ENCODE measurements at regions of chr11 and their contacts with region 1.

Region 1: GRCh38 chr11:102346748-102347461 is at the start of gene BIRC2:
- DNase-seq: peak; percentile 91 to 98 (median 94)
- ATAC-seq: peak; percentile 81
- H3K4me3 ChIP-seq: peak within 1 kb of the TSS; percentile 65
- H3K4me3 Mint-ChIP-seq: peak within 1 kb of the TSS; percentile 98
- H3K27ac ChIP-seq: peak within 1 kb of the TSS; percentile 95 to 96
- H3K27ac Mint-ChIP-seq: peak within 1 kb of the TSS; percentile 100
- H3K4me1 ChIP-seq: peaks cover 7% of the 10 kb centered on the region
- H3K4me1 Mint-ChIP-seq: peaks cover 44% of the 10 kb centered on the region
- H3K27me3 ChIP-seq: no peaks in the 10 kb centered on the region
- H3K27me3 Mint-ChIP-seq: no peaks in the 10 kb centered on the region
- CTCF ChIP-seq: peak; percentile 72
- total RNA-seq, gene BIRC2: 107 to 109 TPM

Region 2: DNA sequence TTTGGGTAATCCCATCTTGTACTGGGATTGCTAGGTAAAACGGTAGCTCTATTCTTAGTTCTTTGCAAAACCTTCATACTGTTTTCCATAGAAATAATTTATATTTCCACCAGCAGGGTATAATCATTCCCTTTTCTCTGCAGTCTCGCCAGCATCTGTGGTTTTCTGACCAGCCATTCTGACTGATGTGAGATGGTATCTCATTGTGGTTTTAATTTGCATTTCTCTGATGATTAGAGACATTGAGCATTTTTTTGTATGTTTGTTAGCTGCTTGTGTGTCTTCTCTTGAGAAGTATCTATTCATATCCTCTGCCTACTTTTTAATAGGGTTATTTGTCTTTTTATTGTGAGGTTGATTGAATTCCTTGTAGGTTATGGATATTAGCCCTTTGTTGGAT is 1438.2 kb before region 1 on chr11:
- CTCF ChIA-PET with region 1: no interaction called
- POLR2A ChIA-PET with region 1: no interaction called
- intact Hi-C with region 1: no loop called
- DNase-seq: no peak
- ATAC-seq: no peak
- H3K4me3 ChIP-seq: no peak overlapping the region
- H3K4me3 Mint-ChIP-seq: no peak overlapping the region
- H3K27ac ChIP-seq: no peak overlapping the region
- H3K27ac Mint-ChIP-seq: no peak overlapping the region
- H3K4me1 ChIP-seq: no peaks in the 10 kb centered on the region
- H3K4me1 Mint-ChIP-seq: no peaks in the 10 kb centered on the region
- H3K27me3 ChIP-seq: no peaks in the 10 kb centered on the region
- H3K27me3 Mint-ChIP-seq: no peaks in the 10 kb centered on the region
- CTCF ChIP-seq: no peak

Region 3: GRCh38 chr11:102097186-102097585 is 249.7 kb before region 1 on chr11:
- CTCF ChIA-PET with region 1: no interaction called
- POLR2A ChIA-PET with region 1: no interaction called
- intact Hi-C with region 1: no loop called
- DNase-seq: no peak
- ATAC-seq: no peak
- H3K4me3 ChIP-seq: no peak overlapping the region
- H3K4me3 Mint-ChIP-seq: no peak overlapping the region
- H3K27ac ChIP-seq: no peak overlapping the region
- H3K27ac Mint-ChIP-seq: no peak overlapping the region
- H3K4me1 ChIP-seq: no peaks in the 10 kb centered on the region
- H3K4me1 Mint-ChIP-seq: no peaks in the 10 kb centered on the region
- H3K27me3 ChIP-seq: no peaks in the 10 kb centered on the region
- H3K27me3 Mint-ChIP-seq: peaks cover 13% of the 10 kb centered on the region
- CTCF ChIP-seq: no peak

Region 4: DNA sequence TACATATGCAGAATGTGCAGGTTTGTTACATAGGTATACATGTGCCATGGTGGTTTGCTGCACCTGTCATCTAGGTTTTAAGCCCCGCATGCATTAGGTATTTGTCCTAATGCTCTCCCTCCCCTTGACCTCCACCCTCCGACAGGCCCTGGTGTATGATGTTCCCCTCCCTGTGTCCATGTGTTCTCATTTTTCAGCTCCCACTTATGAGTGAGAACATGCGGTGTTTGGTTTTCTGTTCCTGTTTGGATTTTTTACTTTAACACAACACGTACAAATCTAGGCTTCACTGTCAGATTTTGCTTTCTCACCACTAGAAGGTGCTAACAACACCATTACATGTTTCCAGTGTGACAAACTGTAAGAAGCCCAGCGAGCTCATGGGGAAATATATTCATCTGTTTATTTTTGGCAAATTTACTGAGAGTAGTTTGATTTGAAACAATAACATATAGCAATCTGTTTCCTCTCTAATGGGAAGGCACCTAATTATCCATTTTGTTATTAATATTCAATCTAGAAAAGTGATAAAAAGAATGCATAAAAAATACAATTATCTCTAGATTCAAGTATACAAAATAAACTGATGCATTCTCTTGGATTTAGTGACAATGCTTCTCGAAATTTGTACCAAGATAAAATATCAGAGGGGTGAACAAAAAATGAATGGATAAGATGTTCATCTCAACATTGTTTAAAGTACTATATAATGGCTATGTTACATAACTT is 52.9 kb before region 1 on chr11:
- CTCF ChIA-PET with region 1: interaction called, 24 read pairs
- POLR2A ChIA-PET with region 1: interaction called, 12 read pairs
- intact Hi-C with region 1: loop called in 1 of 2 experiments (anchors 2 kb)
- DNase-seq: peak in 5 of 14 experiments; percentile 8 to 85 (median 79)
- ATAC-seq: peak; percentile 99
- H3K4me3 ChIP-seq: peak overlapping the region; percentile 48
- H3K4me3 Mint-ChIP-seq: peak overlapping the region; percentile 82
- H3K27ac ChIP-seq: no peak overlapping the region
- H3K27ac Mint-ChIP-seq: peak overlapping the region; percentile 68
- H3K4me1 ChIP-seq: peaks cover 14% of the 10 kb centered on the region
- H3K4me1 Mint-ChIP-seq: peaks cover 36% of the 10 kb centered on the region
- H3K27me3 ChIP-seq: no peaks in the 10 kb centered on the region
- H3K27me3 Mint-ChIP-seq: no peaks in the 10 kb centered on the region
- CTCF ChIP-seq: peak; percentile 92

Region 5: DNA sequence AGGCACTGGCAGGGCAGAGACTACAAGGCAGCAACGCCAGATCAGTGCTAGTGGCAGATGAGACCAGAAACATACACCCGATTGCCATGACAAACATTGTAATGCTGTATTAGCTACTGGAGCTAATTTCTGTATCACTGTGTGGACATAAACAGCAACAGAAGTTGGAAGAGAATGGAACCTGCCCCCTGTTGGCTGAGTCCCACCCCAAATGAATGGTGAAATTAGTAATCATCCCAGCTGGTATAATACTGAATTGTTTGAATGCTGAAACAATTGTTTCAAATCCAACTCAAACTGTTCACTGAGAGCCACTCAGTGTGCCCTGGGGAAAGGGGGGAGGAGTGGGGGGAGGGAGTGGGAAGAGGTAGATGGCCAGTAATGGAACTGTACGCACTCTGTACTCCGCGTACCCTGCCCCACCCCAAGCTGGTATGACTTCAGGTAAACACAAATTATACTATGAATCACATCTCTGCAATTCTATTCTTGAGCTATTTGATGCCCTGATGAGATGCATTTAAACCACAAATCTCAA is 40.8 kb before region 1 on chr11:
- CTCF ChIA-PET with region 1: interaction called, 15 read pairs
- POLR2A ChIA-PET with region 1: interaction called, 7 read pairs
- intact Hi-C with region 1: loop called in 1 of 2 experiments (anchors 5 kb)
- DNase-seq: peak in 10 of 14 experiments; percentile 34 to 66 (median 40)
- ATAC-seq: peak; percentile 72
- H3K4me3 ChIP-seq: no peak overlapping the region
- H3K4me3 Mint-ChIP-seq: peak overlapping the region; percentile 69
- H3K27ac ChIP-seq: peak overlapping the region; percentile 76 to 80
- H3K27ac Mint-ChIP-seq: peak overlapping the region; percentile 98
- H3K4me1 ChIP-seq: peaks cover 54% of the 10 kb centered on the region
- H3K4me1 Mint-ChIP-seq: peaks cover 68% of the 10 kb centered on the region
- H3K27me3 ChIP-seq: no peaks in the 10 kb centered on the region
- H3K27me3 Mint-ChIP-seq: no peaks in the 10 kb centered on the region
- CTCF ChIP-seq: no peak

Region 6: DNA sequence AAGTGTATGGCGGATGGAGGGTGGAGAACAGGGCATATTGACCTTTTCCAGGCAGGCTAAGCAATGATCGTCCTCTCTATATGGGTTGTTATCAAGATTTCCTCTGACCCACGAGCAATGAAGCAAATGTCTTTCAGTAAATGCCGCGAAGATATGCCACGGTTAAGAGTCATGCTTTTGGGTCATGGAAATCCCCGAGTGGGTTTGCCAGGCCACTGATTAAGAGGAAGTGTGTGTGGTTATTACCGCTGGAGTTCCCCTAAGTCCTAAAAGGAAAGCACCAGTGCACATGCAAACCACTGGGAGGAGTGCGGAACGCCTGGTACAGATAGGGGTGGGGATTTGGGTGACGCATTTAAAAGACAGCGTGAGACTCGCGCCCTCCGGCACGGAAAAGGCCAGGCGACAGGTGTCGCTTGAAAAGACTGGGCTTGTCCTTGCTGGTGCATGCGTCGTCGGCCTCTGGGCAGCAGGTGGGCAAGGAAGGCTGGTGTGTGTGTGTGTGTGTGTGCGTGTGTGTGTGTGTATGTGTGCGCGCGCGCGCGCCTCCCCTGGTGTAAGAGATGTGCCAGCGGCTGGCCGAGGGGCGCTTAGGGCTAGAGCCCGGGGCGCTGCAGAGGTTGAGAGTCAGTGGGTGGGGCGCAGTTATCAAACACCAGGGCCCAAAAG is 29.7 kb before region 1 on chr11 and contains the start of gene BIRC3:
- CTCF ChIA-PET with region 1: interaction called, 5 read pairs
- POLR2A ChIA-PET with region 1: interaction called, 5 read pairs
- intact Hi-C with region 1: loop called (anchors 1 to 2 kb)
- DNase-seq: peak; percentile 74 to 99 (median 88)
- ATAC-seq: peak; percentile 83
- H3K4me3 ChIP-seq: peak within 1 kb of the TSS; percentile 91
- H3K4me3 Mint-ChIP-seq: peak within 1 kb of the TSS; percentile 97
- H3K27ac ChIP-seq: peak within 1 kb of the TSS; percentile 95 to 96
- H3K27ac Mint-ChIP-seq: peak within 1 kb of the TSS; percentile 93
- H3K4me1 ChIP-seq: peaks cover 42% of the 10 kb centered on the region
- H3K4me1 Mint-ChIP-seq: peaks cover 75% of the 10 kb centered on the region
- H3K27me3 ChIP-seq: no peaks in the 10 kb centered on the region
- H3K27me3 Mint-ChIP-seq: no peaks in the 10 kb centered on the region
- CTCF ChIP-seq: peak; percentile 34
- total RNA-seq, gene BIRC3: 115 to 124 TPM

Region 7: DNA sequence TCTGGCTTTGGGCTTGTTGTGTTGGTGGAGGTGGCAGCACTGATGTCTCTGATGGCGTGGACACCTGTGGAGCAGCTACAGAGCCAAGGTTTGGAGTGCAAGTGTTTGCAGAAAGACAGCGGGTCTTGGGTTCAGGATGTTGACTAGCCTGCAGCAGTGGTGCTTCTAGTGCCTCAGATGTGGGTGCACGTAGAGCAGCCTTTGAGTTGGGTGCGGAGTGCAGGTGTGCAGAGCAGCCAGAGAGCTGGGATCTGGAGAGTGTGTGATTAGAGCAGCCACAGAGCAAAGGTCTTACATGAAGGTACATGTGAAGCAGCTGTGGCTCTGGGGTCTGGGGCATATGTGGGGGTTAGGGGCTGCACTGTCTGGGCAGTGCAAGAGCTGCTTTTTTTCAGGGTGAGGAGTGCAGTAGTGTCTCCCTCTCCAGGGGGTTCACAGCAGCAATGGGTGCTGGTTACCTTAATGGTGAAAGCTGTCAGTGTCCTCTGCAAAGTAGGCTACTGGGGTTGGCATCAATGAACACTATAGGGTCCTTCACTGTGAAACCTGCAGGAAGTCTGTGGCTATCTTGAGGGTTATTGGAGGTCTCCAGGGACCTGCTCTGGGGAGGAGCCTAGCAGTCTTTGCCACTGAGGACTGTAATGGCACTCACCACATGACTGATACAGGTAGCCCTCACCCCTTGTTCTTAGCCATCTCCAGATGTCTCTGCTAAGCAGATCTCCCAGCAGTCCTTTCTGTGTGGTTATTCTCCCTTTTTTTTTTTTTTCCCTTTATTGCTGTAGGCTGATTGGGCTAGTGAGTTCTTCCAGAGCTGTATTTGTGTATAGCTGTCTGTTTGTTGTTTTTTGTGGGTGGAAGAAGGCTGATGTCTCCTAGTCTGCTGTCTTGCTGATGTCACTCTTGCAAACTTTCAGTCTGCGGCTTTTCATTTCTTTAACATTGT is 14.5 kb after region 1 on chr11:
- CTCF ChIA-PET with region 1: interaction called, 17 read pairs
- POLR2A ChIA-PET with region 1: interaction called, 13 read pairs
- intact Hi-C with region 1: loop called in 1 of 2 experiments (anchors 1 kb)
- DNase-seq: peak; percentile 35 to 85 (median 60)
- ATAC-seq: peak; percentile 74
- H3K4me3 ChIP-seq: peak overlapping the region; percentile 24
- H3K4me3 Mint-ChIP-seq: peak overlapping the region; percentile 44
- H3K27ac ChIP-seq: peak overlapping the region; percentile 46 to 76
- H3K27ac Mint-ChIP-seq: peak overlapping the region; percentile 95
- H3K4me1 ChIP-seq: peaks cover 17% of the 10 kb centered on the region
- H3K4me1 Mint-ChIP-seq: peaks cover 49% of the 10 kb centered on the region
- H3K27me3 ChIP-seq: no peaks in the 10 kb centered on the region
- H3K27me3 Mint-ChIP-seq: no peaks in the 10 kb centered on the region
- CTCF ChIP-seq: no peak

Region 8: GRCh38 chr11:102415304-102415916 is 68.5 kb after region 1 on chr11:
- CTCF ChIA-PET with region 1: interaction called, 8 read pairs
- POLR2A ChIA-PET with region 1: no interaction called
- intact Hi-C with region 1: loop called in 1 of 2 experiments (anchors 2 kb)
- DNase-seq: peak in 2 of 14 experiments; percentile 27 to 61
- ATAC-seq: peak; percentile 59
- H3K4me3 ChIP-seq: peak overlapping the region; percentile 19
- H3K4me3 Mint-ChIP-seq: peak overlapping the region; percentile 74
- H3K27ac ChIP-seq: peak overlapping the region; percentile 43 to 59
- H3K27ac Mint-ChIP-seq: peak overlapping the region; percentile 81
- H3K4me1 ChIP-seq: peaks cover 59% of the 10 kb centered on the region
- H3K4me1 Mint-ChIP-seq: peaks cover 97% of the 10 kb centered on the region
- H3K27me3 ChIP-seq: no peaks in the 10 kb centered on the region
- H3K27me3 Mint-ChIP-seq: no peaks in the 10 kb centered on the region
- CTCF ChIP-seq: no peak

Region 9: GRCh38 chr11:102592634-102593581 is 246.0 kb after region 1 on chr11:
- CTCF ChIA-PET with region 1: no interaction called
- POLR2A ChIA-PET with region 1: no interaction called
- intact Hi-C with region 1: no loop called
- DNase-seq: no peak
- ATAC-seq: no peak
- H3K4me3 ChIP-seq: no peak overlapping the region
- H3K4me3 Mint-ChIP-seq: no peak overlapping the region
- H3K27ac ChIP-seq: no peak overlapping the region
- H3K27ac Mint-ChIP-seq: no peak overlapping the region
- H3K4me1 ChIP-seq: no peaks in the 10 kb centered on the region
- H3K4me1 Mint-ChIP-seq: no peaks in the 10 kb centered on the region
- H3K27me3 ChIP-seq: no peaks in the 10 kb centered on the region
- H3K27me3 Mint-ChIP-seq: no peaks in the 10 kb centered on the region
- CTCF ChIP-seq: no peak

Region 10: GRCh38 chr11:102933627-102934026 is 586.7 kb after region 1 on chr11:
- CTCF ChIA-PET with region 1: no interaction called
- POLR2A ChIA-PET with region 1: no interaction called
- intact Hi-C with region 1: loop called in 1 of 2 experiments (anchors 10 kb)
- DNase-seq: no peak
- ATAC-seq: no peak
- H3K4me3 ChIP-seq: no peak overlapping the region
- H3K4me3 Mint-ChIP-seq: no peak overlapping the region
- H3K27ac ChIP-seq: no peak overlapping the region
- H3K27ac Mint-ChIP-seq: no peak overlapping the region
- H3K4me1 ChIP-seq: no peaks in the 10 kb centered on the region
- H3K4me1 Mint-ChIP-seq: no peaks in the 10 kb centered on the region
- H3K27me3 ChIP-seq: peaks cover 3 to 4% of the 10 kb centered on the region in 2 experiments
- H3K27me3 Mint-ChIP-seq: peaks cover 25% of the 10 kb centered on the region
- CTCF ChIP-seq: no peak